K562 (cell line): ENCODE measurements at regions of chr22 and their contacts with region 1.

Region 1: DNA sequence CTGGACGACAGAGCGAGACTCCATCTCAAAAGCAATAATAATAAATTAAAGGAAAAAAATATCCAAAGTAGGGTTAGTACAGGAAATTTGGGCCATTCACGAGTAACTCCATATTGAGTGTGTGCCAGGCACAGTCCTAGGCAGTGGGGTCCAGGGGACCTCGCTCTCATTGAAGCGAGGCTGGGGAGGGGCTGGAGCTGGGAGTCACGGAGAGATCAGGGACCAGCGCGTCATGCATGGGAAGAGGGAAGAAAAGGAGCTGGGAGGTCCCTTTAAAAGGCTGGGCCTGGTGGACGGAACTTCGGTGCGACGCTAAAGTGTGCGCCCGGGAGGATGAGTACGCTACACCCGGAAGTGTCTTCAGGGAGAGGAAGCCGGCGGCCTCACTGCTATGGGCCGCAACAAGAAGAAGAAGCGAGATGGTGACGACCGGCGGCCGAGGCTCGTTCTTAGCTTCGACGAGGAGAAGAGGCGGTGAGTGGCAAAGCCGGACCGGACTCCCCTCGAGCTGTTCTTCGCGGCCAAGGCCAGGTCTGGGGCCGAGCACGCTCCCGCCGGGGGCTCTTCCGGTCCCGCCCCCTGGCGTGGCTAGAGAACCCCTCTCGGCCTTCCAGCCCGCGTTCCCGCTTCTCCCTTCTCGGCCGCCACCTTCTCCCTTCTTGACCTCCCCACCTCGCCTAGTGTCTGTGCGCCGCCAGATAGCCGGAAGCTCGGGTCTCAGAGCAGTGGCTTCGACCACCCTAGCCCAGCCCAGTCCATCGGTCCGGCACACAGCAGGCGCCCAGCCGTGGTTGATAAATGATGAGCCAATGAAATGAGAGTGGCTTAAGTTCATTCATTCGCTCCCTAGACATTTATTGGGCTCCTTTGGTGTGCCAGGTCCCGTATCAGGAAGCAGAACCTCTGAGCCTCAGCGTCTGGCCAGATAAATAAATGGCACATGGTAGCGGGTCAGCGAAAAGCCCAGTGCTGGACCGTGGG is at the start of gene NOL12:
- DNase-seq: peak; percentile 79 to 89 (median 86)
- ATAC-seq: peak; percentile 91
- H3K4me3 ChIP-seq: peak within 1 kb of the TSS; percentile 77
- H3K27ac ChIP-seq: peak within 1 kb of the TSS; percentile 79
- H3K4me1 ChIP-seq: peaks cover 8 to 19% of the 10 kb centered on the region in 2 experiments; a peak in 4 of 5 replicates
- H3K27me3 ChIP-seq: no peaks in the 10 kb centered on the region
- CTCF ChIP-seq: no peak
- EP300 ChIP-seq: no peak
- POLR2A ChIP-seq: peak; percentile 81
- RAD21 ChIP-seq: no peak
- polyA plus RNA-seq, gene NOL12: 2.8 to 10.5 TPM

Region 2: DNA sequence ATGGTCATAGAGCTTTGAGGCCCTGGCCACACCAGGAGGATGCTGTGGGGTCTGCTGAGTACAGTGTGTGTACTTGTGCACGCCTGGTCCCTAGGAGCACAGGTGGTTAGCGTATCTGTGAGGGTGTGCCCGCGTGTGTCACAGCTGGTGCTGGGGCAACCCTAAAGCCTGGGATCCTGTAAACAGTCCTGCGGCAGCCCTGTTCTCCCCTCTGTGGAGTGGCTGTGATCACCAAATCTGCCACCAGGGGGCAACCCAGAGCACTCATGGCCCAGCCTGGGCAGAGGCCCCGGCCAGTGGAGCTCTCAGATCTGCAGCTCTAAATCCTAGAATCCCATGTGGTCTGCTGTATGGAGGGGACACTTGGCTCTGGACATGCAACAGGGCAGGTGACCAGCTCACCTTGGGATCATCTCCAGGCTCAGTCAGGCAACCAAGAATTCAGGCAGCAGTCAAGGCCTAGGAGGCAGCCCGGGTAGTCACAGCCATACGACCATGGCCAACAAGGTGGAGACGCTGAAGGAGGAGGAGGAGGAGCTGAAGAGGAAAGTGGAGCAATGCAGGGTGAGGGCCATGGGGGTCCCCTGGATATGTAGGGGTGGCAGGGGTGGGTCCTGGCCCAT is 43.0 kb before region 1 on chr22:
- CTCF ChIA-PET with region 1: interaction called, 8 read pairs
- POLR2A ChIA-PET with region 1: interaction called, 6 read pairs
- in situ Hi-C with region 1: no loop called
- intact Hi-C with region 1: loop called (anchors 1 kb)
- DNase-seq: peak; percentile 58 to 76 (median 68)
- ATAC-seq: peak; percentile 88
- H3K4me3 ChIP-seq: no peak overlapping the region
- H3K27ac ChIP-seq: no peak overlapping the region; the same call in 2 of the 3 replicates
- H3K4me1 ChIP-seq: peaks cover 10 to 51% of the 10 kb centered on the region in 2 experiments; a peak in 4 of 5 replicates
- H3K27me3 ChIP-seq: no peaks in the 10 kb centered on the region
- CTCF ChIP-seq: peak; percentile 78 to 85 (median 81)
- EP300 ChIP-seq: no peak
- POLR2A ChIP-seq: no peak
- RAD21 ChIP-seq: peak; percentile 53 to 67

Region 3: GRCh38 chr22:37792494-37792893 is 106.2 kb after region 1 on chr22:
- CTCF ChIA-PET with region 1: interaction called, 5 read pairs
- POLR2A ChIA-PET with region 1: no interaction called
- in situ Hi-C with region 1: no loop called
- intact Hi-C with region 1: loop called (anchors 2 kb)
- DNase-seq: no peak
- ATAC-seq: no peak
- H3K4me3 ChIP-seq: no peak overlapping the region
- H3K27ac ChIP-seq: no peak overlapping the region
- H3K4me1 ChIP-seq: peaks cover 0 to 3% of the 10 kb centered on the region in 2 experiments; a peak in 1 of 5 replicates
- H3K27me3 ChIP-seq: no peaks in the 10 kb centered on the region
- CTCF ChIP-seq: no peak
- EP300 ChIP-seq: no peak
- POLR2A ChIP-seq: no peak
- RAD21 ChIP-seq: no peak